Common myeloid progenitor, CD34-positive (primary cell): ENCODE measurements at regions of chr9 and their contacts with region 1.

Region 1: GRCh38 chr9:136564379-136564988 is 18.6 kb upstream of the NOTCH1 start:
- DNase-seq: peak in 1 of 3 donors; percentile 29
- H3K4me3 ChIP-seq: no peak overlapping the region
- H3K27ac ChIP-seq: no peak overlapping the region
- H3K4me1 ChIP-seq: peaks cover 0 to 31% (median 29%) of the 10 kb centered on the region in 4 experiments
- H3K27me3 ChIP-seq: no peaks in the 10 kb centered on the region

Region 2: GRCh38 chr9:136354592-136355085 is 209.8 kb before region 1 on chr9:
- CTCF ChIA-PET with region 1: no interaction called
- POLR2A ChIA-PET with region 1: no interaction called
- DNase-seq: no peak
- H3K4me3 ChIP-seq: no peak overlapping the region
- H3K27ac ChIP-seq: no peak overlapping the region
- H3K4me1 ChIP-seq: no peaks in the 10 kb centered on the region
- H3K27me3 ChIP-seq: no peaks in the 10 kb centered on the region

Region 3: DNA sequence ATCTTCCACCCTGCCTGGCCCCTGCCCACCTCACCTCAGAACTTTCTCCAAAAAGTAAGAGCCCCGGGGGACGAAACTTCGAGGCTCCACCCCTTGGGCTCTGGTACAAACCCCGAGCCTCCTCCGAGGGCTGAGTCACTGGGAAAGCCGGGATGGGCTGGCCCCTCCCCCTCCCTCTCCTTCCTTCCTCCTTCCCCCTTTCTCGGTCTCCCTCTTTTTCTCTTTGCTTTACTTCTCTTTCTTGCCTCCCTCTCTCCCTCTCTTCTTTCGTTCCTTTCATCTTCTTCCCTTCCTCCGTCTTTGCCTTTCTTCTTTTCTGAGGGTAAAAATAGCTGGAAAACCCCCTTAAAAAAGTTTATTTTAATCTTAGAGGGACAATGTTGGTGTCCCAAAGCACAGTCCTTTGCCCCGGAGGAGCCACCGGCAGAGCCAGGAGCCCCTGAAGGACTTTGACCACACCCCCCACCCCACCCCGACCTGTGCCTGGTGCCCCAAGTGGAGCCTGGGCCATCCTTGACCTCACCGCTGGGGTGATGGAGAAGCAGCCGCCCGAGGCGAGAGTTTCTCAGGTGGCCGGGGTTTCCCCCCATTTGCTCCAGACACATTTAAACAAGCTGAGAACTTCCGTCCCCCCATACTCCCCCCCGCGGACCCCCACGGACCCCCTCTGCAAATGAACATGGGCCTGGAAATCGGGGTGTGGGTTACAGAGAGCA is 12.9 kb before region 1 on chr9:
- CTCF ChIA-PET with region 1: interaction called, 13 read pairs
- POLR2A ChIA-PET with region 1: interaction called, 8 read pairs
- DNase-seq: no peak
- H3K4me3 ChIP-seq: peak overlapping the region in 2 of 7 experiments; percentile 36 to 51
- H3K27ac ChIP-seq: peak overlapping the region; percentile 25 to 66
- H3K4me1 ChIP-seq: peaks cover 2 to 69% (median 64%) of the 10 kb centered on the region in 4 experiments
- H3K27me3 ChIP-seq: no peaks in the 10 kb centered on the region

Region 4: DNA sequence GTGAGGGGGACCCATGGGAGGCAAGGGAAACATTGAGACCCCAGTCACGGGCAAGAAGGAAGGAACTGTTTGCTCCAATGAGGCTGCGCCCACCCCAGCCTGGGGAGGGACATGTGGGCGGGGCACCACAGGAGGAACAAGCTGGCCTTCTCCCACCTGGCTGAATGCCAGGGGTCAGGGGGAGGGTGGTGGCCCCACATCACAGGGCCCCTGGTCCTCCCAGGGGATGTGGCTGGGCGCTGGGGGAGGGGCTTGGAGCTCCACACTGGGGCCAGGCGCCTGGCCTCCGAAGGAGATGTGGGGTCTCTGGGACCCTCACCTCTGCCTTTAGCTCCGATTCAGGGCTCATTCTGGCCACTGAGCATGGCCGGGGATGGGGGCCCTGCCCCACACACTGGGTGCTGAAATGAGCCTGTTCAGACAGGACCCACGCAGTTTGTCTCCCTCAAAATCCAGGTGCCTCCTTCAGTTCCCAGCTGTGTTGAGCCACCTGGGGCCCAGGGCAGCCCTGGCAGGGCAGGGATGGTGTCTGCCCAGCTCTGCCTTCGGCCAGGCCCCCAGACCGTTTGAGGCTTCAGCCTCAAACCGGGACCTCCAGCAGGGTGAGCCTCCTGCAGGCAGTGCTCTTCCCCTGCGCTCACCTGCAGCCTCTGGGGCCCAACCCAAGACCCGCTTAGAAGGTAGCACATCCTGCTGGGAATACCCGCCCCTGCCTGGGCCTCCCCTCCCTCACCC is 14.6 kb after region 1 on chr9:
- CTCF ChIA-PET with region 1: interaction called, 12 read pairs
- POLR2A ChIA-PET with region 1: no interaction called
- DNase-seq: peak in 2 of 3 donors; percentile 38 to 54
- H3K4me3 ChIP-seq: no peak overlapping the region
- H3K27ac ChIP-seq: no peak overlapping the region
- H3K4me1 ChIP-seq: peaks cover 0 to 26% (median 16%) of the 10 kb centered on the region in 4 experiments
- H3K27me3 ChIP-seq: no peaks in the 10 kb centered on the region

Region 5: GRCh38 chr9:137705443-137706293 is 1141.2 kb after region 1 on chr9:
- CTCF ChIA-PET with region 1: no interaction called
- POLR2A ChIA-PET with region 1: no interaction called
- DNase-seq: peak in 1 of 3 donors; percentile 42
- H3K4me3 ChIP-seq: peak overlapping the region in 3 of 7 experiments; percentile 20 to 60 (median 32)
- H3K27ac ChIP-seq: no peak overlapping the region
- H3K4me1 ChIP-seq: peaks cover 0 to 17% (median 15%) of the 10 kb centered on the region in 4 experiments
- H3K27me3 ChIP-seq: no peaks in the 10 kb centered on the region